ENCODE measurements at regions of chr1 and their contacts with region 1.

Region 1: GRCh38 chr1:113219377-113219776 is 146.4 kb downstream of the LRIG2 start:
- DNase-seq: no peak
- H3K4me3 ChIP-seq: no peak overlapping the region
- H3K4me3 Mint-ChIP-seq: no peak overlapping the region
- H3K27ac Mint-ChIP-seq: peak overlapping the region; percentile 55
- H3K4me1 ChIP-seq: peaks cover 39% of the 10 kb centered on the region
- H3K4me1 Mint-ChIP-seq: peaks cover 34% of the 10 kb centered on the region
- H3K27me3 ChIP-seq: no peaks in the 10 kb centered on the region
- H3K27me3 Mint-ChIP-seq: no peaks in the 10 kb centered on the region
- CTCF ChIP-seq: no peak

Region 2: GRCh38 chr1:112872551-112872962 is 346.8 kb before region 1 on chr1:
- CTCF ChIA-PET with region 1: no interaction called
- POLR2A ChIA-PET with region 1: no interaction called
- intact Hi-C with region 1: no loop called
- DNase-seq: peak; percentile 25 to 65
- H3K4me3 ChIP-seq: no peak overlapping the region
- H3K4me3 Mint-ChIP-seq: peak overlapping the region; percentile 29
- H3K27ac Mint-ChIP-seq: peak overlapping the region; percentile 81
- H3K4me1 ChIP-seq: peaks cover 59% of the 10 kb centered on the region
- H3K4me1 Mint-ChIP-seq: peaks cover 37% of the 10 kb centered on the region
- H3K27me3 ChIP-seq: no peaks in the 10 kb centered on the region
- H3K27me3 Mint-ChIP-seq: no peaks in the 10 kb centered on the region
- CTCF ChIP-seq: no peak

Region 3: DNA sequence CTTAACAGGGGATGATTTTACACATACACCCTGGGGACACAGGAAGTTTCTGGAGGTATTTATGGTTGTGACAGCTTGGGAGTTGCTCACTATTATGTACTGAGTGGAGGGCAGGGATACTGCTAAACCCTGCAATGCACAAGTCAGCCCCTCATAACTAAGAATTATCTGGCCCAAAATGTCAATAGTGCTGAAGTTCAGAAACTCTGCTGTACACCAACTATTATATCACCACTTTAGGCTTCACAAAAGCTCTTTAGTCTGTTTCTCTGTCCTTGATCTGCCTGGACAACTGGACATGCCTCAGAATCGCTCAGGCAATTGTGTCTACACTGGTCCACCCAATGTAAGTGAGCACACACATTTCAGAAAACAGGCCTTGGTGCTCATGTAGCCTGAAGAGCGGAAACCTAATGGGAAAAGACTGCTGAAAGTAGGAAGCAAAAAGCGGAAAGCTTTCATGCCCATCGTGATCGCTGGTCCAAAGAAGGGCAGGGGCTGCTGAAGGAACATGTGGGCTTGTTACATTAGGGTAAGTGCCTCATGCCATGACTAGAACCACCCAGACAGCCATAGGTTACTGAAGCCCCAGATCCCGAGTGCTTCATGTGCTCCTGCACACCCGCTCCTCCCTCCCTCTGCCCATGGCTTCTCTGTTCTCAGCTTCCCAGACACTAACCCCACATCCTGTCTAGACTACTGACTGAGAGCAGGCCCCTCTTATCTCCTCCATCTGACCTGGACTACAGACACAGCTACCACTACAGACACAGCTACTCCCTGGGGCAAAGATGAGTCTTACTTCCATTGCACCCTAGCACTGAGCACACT is 72.9 kb before region 1 on chr1:
- CTCF ChIA-PET with region 1: no interaction called
- POLR2A ChIA-PET with region 1: no interaction called
- intact Hi-C with region 1: loop called (anchors 5 kb)
- DNase-seq: peak; percentile 5 to 52
- H3K4me3 ChIP-seq: no peak overlapping the region
- H3K4me3 Mint-ChIP-seq: no peak overlapping the region
- H3K27ac Mint-ChIP-seq: peak overlapping the region; percentile 33
- H3K4me1 ChIP-seq: peaks cover 27% of the 10 kb centered on the region
- H3K4me1 Mint-ChIP-seq: peaks cover 24% of the 10 kb centered on the region
- H3K27me3 ChIP-seq: no peaks in the 10 kb centered on the region
- H3K27me3 Mint-ChIP-seq: no peaks in the 10 kb centered on the region
- CTCF ChIP-seq: no peak

Region 4: DNA sequence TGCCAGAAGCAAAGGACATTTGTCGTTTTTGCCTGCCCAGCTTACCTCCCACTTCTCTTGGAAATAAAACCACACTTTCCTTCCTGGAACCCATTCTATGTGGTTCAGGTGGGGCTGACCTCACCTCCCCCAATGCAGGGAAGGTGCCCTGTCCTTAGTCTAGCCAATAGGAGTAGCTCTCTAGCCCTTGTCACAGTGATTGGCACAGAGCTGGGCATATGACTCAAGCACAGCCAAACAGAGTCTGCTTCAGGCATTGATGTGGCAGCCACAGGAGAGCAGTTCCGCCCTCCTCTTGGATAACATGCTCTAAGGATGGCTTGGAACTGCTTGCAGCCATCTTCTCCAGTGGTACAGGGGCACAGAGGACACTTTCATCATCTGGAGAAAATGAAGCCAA is 12.4 kb before region 1 on chr1:
- CTCF ChIA-PET with region 1: interaction called, 7 read pairs
- POLR2A ChIA-PET with region 1: no interaction called
- intact Hi-C with region 1: loop called (anchors 1 kb)
- DNase-seq: peak; percentile 30 to 56
- H3K4me3 ChIP-seq: no peak overlapping the region
- H3K4me3 Mint-ChIP-seq: peak overlapping the region; percentile 49
- H3K27ac Mint-ChIP-seq: peak overlapping the region; percentile 84
- H3K4me1 ChIP-seq: peaks cover 56% of the 10 kb centered on the region
- H3K4me1 Mint-ChIP-seq: peaks cover 45% of the 10 kb centered on the region
- H3K27me3 ChIP-seq: no peaks in the 10 kb centered on the region
- H3K27me3 Mint-ChIP-seq: no peaks in the 10 kb centered on the region
- CTCF ChIP-seq: no peak

Region 5: DNA sequence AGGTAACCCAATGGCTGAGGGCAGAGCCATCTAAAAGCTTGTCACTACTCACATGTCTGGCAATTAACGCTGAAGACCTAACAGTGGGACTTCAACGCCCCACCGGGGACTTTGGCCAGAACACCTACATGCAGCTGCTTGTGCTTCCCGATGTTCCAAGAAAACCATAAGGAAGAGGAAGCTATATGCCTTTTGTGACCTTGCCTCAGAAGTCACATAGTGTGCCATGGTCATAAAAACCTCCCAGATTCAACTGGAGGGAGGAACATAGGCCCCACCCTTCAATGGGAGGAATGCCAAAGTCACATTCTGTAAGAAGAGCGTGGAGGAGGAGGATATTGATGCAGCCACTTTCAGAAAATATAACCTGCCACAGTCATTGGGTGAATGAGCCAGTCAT is 23.1 kb after region 1 on chr1:
- CTCF ChIA-PET with region 1: no interaction called
- POLR2A ChIA-PET with region 1: no interaction called
- intact Hi-C with region 1: loop called (anchors 1 kb)
- DNase-seq: peak; percentile 7 to 43
- H3K4me3 ChIP-seq: no peak overlapping the region
- H3K4me3 Mint-ChIP-seq: no peak overlapping the region
- H3K27ac Mint-ChIP-seq: no peak overlapping the region
- H3K4me1 ChIP-seq: peaks cover 26% of the 10 kb centered on the region
- H3K4me1 Mint-ChIP-seq: peaks cover 23% of the 10 kb centered on the region
- H3K27me3 ChIP-seq: no peaks in the 10 kb centered on the region
- H3K27me3 Mint-ChIP-seq: no peaks in the 10 kb centered on the region
- CTCF ChIP-seq: no peak

Region 6: GRCh38 chr1:113291777-113292602 is 72.6 kb after region 1 on chr1:
- CTCF ChIA-PET with region 1: no interaction called
- POLR2A ChIA-PET with region 1: no interaction called
- intact Hi-C with region 1: no loop called
- DNase-seq: no peak
- H3K4me3 ChIP-seq: no peak overlapping the region
- H3K4me3 Mint-ChIP-seq: no peak overlapping the region
- H3K27ac Mint-ChIP-seq: no peak overlapping the region
- H3K4me1 ChIP-seq: 0 out of 2 replicates have a peak, but pooled peaks cover 6% of the 10 kb centered on the region
- H3K4me1 Mint-ChIP-seq: peaks cover 23% of the 10 kb centered on the region
- H3K27me3 ChIP-seq: no peaks in the 10 kb centered on the region
- H3K27me3 Mint-ChIP-seq: no peaks in the 10 kb centered on the region
- CTCF ChIP-seq: no peak

Region 7: GRCh38 chr1:113307771-113308445 is 88.5 kb after region 1 on chr1:
- CTCF ChIA-PET with region 1: no interaction called
- POLR2A ChIA-PET with region 1: no interaction called
- intact Hi-C with region 1: loop called (anchors 1 kb)
- DNase-seq: peak in 1 of 2 experiments; percentile 57
- H3K4me3 ChIP-seq: no peak overlapping the region
- H3K4me3 Mint-ChIP-seq: peak overlapping the region; percentile 59
- H3K27ac Mint-ChIP-seq: peak overlapping the region; percentile 84
- H3K4me1 ChIP-seq: peaks cover 23% of the 10 kb centered on the region
- H3K4me1 Mint-ChIP-seq: peaks cover 40% of the 10 kb centered on the region
- H3K27me3 ChIP-seq: no peaks in the 10 kb centered on the region
- H3K27me3 Mint-ChIP-seq: no peaks in the 10 kb centered on the region
- CTCF ChIP-seq: no peak

Region 8: GRCh38 chr1:113493533-113493932 is 274.2 kb after region 1 on chr1:
- CTCF ChIA-PET with region 1: no interaction called
- POLR2A ChIA-PET with region 1: no interaction called
- intact Hi-C with region 1: no loop called
- DNase-seq: no peak
- H3K4me3 ChIP-seq: no peak overlapping the region
- H3K4me3 Mint-ChIP-seq: no peak overlapping the region
- H3K27ac Mint-ChIP-seq: no peak overlapping the region
- H3K4me1 ChIP-seq: no peaks in the 10 kb centered on the region
- H3K4me1 Mint-ChIP-seq: no peaks in the 10 kb centered on the region
- H3K27me3 ChIP-seq: no peaks in the 10 kb centered on the region
- H3K27me3 Mint-ChIP-seq: no peaks in the 10 kb centered on the region
- CTCF ChIP-seq: no peak

Region 9: DNA sequence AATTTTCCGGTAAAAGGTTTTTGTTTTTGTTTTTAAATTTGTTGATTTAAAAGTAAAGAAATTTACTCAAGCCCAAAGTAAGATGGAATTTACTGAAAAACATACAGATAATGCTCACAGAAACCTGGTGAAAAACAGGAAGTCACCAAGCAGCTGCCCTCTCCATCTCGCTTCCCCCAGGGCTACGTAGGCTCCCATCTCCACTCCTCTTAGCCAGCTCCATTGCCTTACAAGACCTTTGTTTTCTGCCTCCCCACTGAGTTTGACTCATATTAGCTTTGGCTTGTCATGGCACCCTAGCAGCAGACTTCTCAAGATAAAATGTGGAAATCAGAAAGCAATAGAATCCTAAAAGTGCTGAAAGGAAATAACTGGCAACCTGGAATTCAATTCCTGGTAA is 482.1 kb after region 1 on chr1:
- CTCF ChIA-PET with region 1: no interaction called
- POLR2A ChIA-PET with region 1: no interaction called
- intact Hi-C with region 1: no loop called
- DNase-seq: no peak
- H3K4me3 ChIP-seq: no peak overlapping the region
- H3K4me3 Mint-ChIP-seq: no peak overlapping the region
- H3K27ac Mint-ChIP-seq: no peak overlapping the region
- H3K4me1 ChIP-seq: no peaks in the 10 kb centered on the region
- H3K4me1 Mint-ChIP-seq: no peaks in the 10 kb centered on the region
- H3K27me3 ChIP-seq: no peaks in the 10 kb centered on the region
- H3K27me3 Mint-ChIP-seq: no peaks in the 10 kb centered on the region
- CTCF ChIP-seq: no peak